ENCODE measurements at regions of chr18 and their contacts with region 1.

Region 1: GRCh38 chr18:80171054-80171872 is 62.2 kb downstream of the ADNP2 start:
- DNase-seq: peak; percentile 38
- H3K4me3 ChIP-seq: peak overlapping the region in 1 of 3 experiments; percentile 30
- H3K27ac ChIP-seq: no peak overlapping the region
- H3K4me1 ChIP-seq: peaks cover 30% of the 10 kb centered on the region
- H3K27me3 ChIP-seq: no peaks in the 10 kb centered on the region
- CTCF ChIP-seq: peak; percentile 85 to 98

Region 2: GRCh38 chr18:80023173-80023572 is 148.1 kb before region 1 on chr18:
- CTCF ChIA-PET with region 1: no interaction called
- dilution Hi-C with region 1: no loop called
- in situ Hi-C with region 1: no loop called
- intact Hi-C with region 1: no loop called
- DNase-seq: no peak
- H3K4me3 ChIP-seq: no peak overlapping the region
- H3K27ac ChIP-seq: no peak overlapping the region
- H3K4me1 ChIP-seq: no peaks in the 10 kb centered on the region
- H3K27me3 ChIP-seq: no peaks in the 10 kb centered on the region
- CTCF ChIP-seq: peak; percentile 23 to 25

Region 3: DNA sequence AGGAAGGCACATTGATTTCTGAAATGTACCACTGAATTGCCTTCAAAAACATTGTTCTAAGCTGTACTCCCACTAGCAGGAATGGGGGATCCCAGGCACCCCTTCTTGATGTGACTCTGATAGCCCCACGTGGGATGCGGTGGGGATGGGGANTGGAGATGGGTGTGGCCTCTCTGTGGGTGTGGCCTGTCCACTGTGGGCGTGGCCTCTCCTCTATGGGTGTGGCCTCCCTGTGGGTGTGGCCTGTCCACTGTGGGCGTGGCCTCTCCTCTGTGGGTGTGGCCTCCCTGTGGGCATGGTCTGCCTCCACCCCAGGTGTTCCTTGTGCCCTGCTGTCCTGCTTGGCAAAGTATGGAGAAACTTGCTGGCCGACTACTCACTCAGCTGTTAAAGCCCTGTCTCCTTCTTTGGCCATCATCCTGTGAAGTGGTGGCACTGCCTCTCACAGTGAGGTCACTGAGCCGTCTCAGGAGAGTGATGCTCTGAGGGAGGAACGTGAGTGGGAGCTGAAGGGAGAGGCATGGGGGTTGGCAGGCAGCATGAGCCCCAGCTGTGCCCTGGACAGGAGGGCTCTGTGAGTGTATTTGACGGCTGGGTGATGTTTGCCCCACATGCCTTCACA is 82.7 kb after region 1 on chr18:
- CTCF ChIA-PET with region 1: no interaction called
- dilution Hi-C with region 1: no loop called
- in situ Hi-C with region 1: no loop called
- intact Hi-C with region 1: loop called (anchors 1 kb)
- DNase-seq: no peak
- H3K4me3 ChIP-seq: no peak overlapping the region
- H3K27ac ChIP-seq: no peak overlapping the region
- H3K4me1 ChIP-seq: peaks cover 28% of the 10 kb centered on the region
- H3K27me3 ChIP-seq: no peaks in the 10 kb centered on the region
- CTCF ChIP-seq: no peak

Measured in mammary epithelial cell (primary cell).